Aorta (tissue), 5 donors: ENCODE measurements at regions of chr4 and their contacts with region 1.

Region 1: DNA sequence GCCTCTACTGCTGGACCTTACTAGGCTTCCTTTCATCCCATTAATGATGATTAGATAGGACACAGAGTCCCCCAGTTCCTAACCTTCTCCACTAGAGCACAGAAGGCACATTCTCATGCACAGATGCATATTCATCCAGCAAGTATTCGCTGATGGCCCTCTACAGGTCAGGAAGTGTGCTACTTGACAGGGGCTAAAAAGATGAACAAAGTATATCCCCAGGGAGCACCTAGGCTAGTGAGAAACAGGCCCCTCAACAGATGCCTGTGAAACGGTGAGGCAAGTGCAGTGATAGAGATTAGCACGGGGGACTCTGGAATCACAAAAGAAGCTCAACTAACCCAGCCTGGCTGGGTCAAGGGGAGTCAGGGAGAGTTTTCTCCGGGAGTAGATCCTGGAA is 95.8 kb downstream of the MGST2 start:
- DNase-seq: no peak
- ATAC-seq: no peak
- H3K4me3 ChIP-seq: no peak overlapping the region
- H3K27ac ChIP-seq: no peak overlapping the region
- H3K4me1 ChIP-seq: peaks cover 3% of the 10 kb centered on the region in 2 donors
- H3K27me3 ChIP-seq: no peaks in the 10 kb centered on the region

Region 2: GRCh38 chr4:139441029-139441428 is 320.4 kb before region 1 on chr4:
- intact Hi-C with region 1: no loop called
- DNase-seq: no peak
- ATAC-seq: no peak
- H3K4me3 ChIP-seq: no peak overlapping the region
- H3K27ac ChIP-seq: no peak overlapping the region
- H3K4me1 ChIP-seq: no peaks in the 10 kb centered on the region
- H3K27me3 ChIP-seq: no peaks in the 10 kb centered on the region

Region 3: GRCh38 chr4:139815778-139816601 is 54.5 kb after region 1 on chr4:
- intact Hi-C with region 1: loop called in 1 of 2 experiments (anchors 5 kb)
- DNase-seq: peak; percentile 55 to 79
- ATAC-seq: peak; percentile 78
- H3K4me3 ChIP-seq: peak overlapping the region; percentile 34 to 72
- H3K27ac ChIP-seq: peak overlapping the region; percentile 30 to 82
- H3K4me1 ChIP-seq: peaks cover 4 to 8% of the 10 kb centered on the region in 2 donors
- H3K27me3 ChIP-seq: no peaks in the 10 kb centered on the region

Region 4: DNA sequence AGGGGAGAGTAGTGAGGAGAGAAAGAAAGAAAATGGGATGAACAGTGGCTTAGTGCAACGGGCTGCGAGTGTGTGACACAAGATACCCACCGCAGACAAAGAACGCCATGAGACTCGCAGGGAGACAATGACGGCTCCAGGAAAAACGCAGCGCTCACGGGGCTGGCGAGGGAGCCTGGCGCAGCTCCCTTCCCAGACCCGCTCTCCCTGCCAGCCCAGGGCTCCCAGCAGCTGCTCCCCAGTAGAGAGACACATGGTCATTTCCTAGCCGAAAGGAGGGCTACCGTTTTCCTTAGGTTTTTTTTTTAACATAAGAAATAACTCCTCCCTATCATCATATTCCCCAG is 243.1 kb after region 1 on chr4:
- intact Hi-C with region 1: no loop called
- DNase-seq: peak; percentile 61 to 83
- ATAC-seq: peak; percentile 78
- H3K4me3 ChIP-seq: peak overlapping the region; percentile 47 to 92
- H3K27ac ChIP-seq: no peak overlapping the region
- H3K4me1 ChIP-seq: peaks cover 0 to 7% of the 10 kb centered on the region in 2 donors
- H3K27me3 ChIP-seq: no peaks in the 10 kb centered on the region